Naive thymus-derived CD4-positive, alpha-beta T cell (primary cell): ENCODE measurements at regions of chr5 and their contacts with region 1.

Region 1: GRCh38 chr5:33299621-33300208 is 141.1 kb upstream of the TARS1 start:
- DNase-seq: no peak
- ATAC-seq: peak; percentile 71
- H3K4me3 ChIP-seq: no peak overlapping the region
- H3K4me3 Mint-ChIP-seq: no peak overlapping the region
- H3K27ac ChIP-seq: no peak overlapping the region
- H3K27ac Mint-ChIP-seq: no peak overlapping the region
- H3K4me1 ChIP-seq: no peaks in the 10 kb centered on the region
- H3K4me1 Mint-ChIP-seq: peaks cover 0 to 12% (median 0%) of the 10 kb centered on the region in 7 donors
- H3K27me3 ChIP-seq: no peaks in the 10 kb centered on the region
- H3K27me3 Mint-ChIP-seq: peaks cover 0 to 3% (median 0%) of the 10 kb centered on the region in 5 donors

Region 2: GRCh38 chr5:33166522-33166921 is 133.2 kb before region 1 on chr5:
- CTCF ChIA-PET with region 1: no interaction called
- POLR2A ChIA-PET with region 1: no interaction called
- intact Hi-C with region 1: loop called in 1 of 2 experiments (anchors 10 kb)
- DNase-seq: no peak
- ATAC-seq: no peak
- H3K4me3 ChIP-seq: no peak overlapping the region
- H3K4me3 Mint-ChIP-seq: no peak overlapping the region
- H3K27ac ChIP-seq: no peak overlapping the region
- H3K27ac Mint-ChIP-seq: no peak overlapping the region
- H3K4me1 ChIP-seq: no peaks in the 10 kb centered on the region
- H3K4me1 Mint-ChIP-seq: no peaks in the 10 kb centered on the region
- H3K27me3 ChIP-seq: no peaks in the 10 kb centered on the region
- H3K27me3 Mint-ChIP-seq: no peaks in the 10 kb centered on the region

Region 3: DNA sequence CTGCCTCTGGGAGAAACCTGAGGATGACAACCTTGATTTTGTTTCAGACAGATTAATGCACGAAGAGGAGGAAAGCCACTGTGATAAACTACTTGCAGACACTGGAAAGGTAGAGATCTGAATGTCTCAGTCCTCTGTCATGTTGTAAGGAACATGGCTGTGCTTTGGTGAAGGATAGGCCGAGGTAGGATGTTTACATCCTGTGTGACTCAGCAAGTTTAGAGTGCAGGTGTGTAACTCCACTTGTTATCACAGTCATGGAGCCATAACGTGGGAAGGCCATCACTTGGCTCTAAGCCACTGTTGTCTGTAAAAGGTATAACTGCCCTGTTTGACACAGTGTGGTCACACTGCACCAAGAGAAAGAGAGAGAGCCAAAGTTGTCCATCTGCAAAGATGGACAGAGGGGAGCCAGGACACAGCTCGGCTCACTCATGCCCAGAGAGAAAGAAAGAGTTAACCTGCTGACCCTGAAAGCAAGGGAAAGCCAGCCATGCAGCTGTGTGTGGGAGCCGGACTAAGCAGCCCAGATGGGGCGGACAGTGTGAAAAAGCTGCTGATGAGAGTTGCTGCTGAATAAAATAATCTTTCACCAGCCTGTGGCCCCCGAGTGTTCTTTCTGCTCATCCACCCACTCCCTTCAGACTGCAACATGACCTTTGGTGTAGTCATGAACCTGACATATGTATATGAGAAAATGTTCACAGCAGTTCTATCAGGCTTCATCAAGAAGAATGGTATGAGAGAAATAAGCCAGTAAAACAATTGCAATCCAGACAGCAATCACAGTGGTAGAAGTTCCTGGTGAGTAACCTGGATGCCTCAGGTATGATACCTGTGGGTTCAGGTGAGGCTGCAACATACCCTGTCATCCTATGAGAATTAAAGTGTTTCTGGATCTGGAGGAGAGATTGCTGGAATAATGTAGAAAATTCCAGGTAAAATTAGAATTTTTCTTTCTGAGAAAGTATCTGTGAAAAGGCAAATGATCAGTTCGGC is 256.9 kb after region 1 on chr5:
- CTCF ChIA-PET with region 1: no interaction called
- POLR2A ChIA-PET with region 1: no interaction called
- intact Hi-C with region 1: no loop called
- DNase-seq: no peak
- ATAC-seq: no peak
- H3K4me3 ChIP-seq: no peak overlapping the region
- H3K4me3 Mint-ChIP-seq: no peak overlapping the region
- H3K27ac ChIP-seq: no peak overlapping the region
- H3K27ac Mint-ChIP-seq: no peak overlapping the region
- H3K4me1 ChIP-seq: no peaks in the 10 kb centered on the region
- H3K4me1 Mint-ChIP-seq: peaks cover 0 to 5% (median 0%) of the 10 kb centered on the region in 7 donors
- H3K27me3 ChIP-seq: peaks cover 0 to 2% of the 10 kb centered on the region in 2 donors
- H3K27me3 Mint-ChIP-seq: peaks cover 0 to 11% (median 5%) of the 10 kb centered on the region in 5 donors